MCF 10A (cell line): ENCODE measurements at regions of chr15 and their contacts with region 1.

Region 1: DNA sequence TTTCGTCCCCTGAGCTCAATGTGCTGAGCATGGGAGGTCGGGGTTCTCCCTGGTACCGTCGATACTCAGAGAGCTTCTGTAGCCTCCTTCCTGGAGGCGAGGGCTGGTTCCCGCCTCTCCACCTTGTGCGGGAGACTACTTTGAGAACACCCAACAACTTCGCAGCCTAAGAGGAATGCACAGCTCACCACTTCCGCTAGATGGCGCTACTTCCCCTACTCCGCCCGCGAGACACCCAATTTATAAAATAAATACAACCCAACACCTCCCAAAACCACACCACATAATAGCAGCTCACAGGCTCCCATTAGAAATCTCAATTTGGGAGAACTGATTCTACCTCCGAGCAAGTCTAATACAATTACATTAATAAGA is 1.2 kb downstream of the RGMA start:
- DNase-seq: peak; percentile 80
- H3K4me3 Mint-ChIP-seq: peak overlapping the region; percentile 69
- H3K27ac Mint-ChIP-seq: no peak overlapping the region
- H3K4me1 Mint-ChIP-seq: no peaks in the 10 kb centered on the region
- H3K27me3 Mint-ChIP-seq: peaks cover 23% of the 10 kb centered on the region
- CTCF ChIP-seq: peak; percentile 88

Region 2: GRCh38 chr15:93076875-93077274 is 10.9 kb before region 1 on chr15:
- CTCF ChIA-PET with region 1: interaction called, 34 read pairs
- POLR2A ChIA-PET with region 1: interaction called, 3 read pairs
- intact Hi-C with region 1: no loop called
- DNase-seq: no peak
- H3K4me3 Mint-ChIP-seq: no peak overlapping the region
- H3K27ac Mint-ChIP-seq: no peak overlapping the region
- H3K4me1 Mint-ChIP-seq: peaks cover 6% of the 10 kb centered on the region
- H3K27me3 Mint-ChIP-seq: peaks cover 14% of the 10 kb centered on the region
- CTCF ChIP-seq: no peak

Region 3: DNA sequence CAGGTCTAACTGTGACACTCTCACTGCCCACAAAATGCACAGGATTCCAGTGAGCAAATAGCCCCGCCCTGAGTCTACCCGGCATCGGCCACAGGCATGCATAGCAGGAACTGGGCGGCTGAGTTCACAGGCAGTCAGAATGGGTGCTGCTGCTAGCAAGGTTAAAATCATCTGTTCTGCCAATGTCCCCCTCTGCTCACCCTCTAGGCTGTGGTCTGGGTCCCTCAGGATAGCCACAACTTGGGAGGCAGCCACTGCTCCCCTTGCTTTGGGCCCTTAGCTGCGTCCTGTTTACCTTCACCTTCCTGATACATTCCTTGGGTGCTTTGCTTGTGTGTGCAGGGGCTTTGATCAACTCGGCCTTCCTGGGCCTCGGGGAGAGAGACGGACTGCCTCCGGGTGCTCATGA is 234.1 kb after region 1 on chr15:
- CTCF ChIA-PET with region 1: no interaction called
- POLR2A ChIA-PET with region 1: no interaction called
- intact Hi-C with region 1: loop called (anchors 5 kb)
- DNase-seq: peak; percentile 33
- H3K4me3 Mint-ChIP-seq: no peak overlapping the region
- H3K27ac Mint-ChIP-seq: no peak overlapping the region
- H3K4me1 Mint-ChIP-seq: peaks cover 6% of the 10 kb centered on the region
- H3K27me3 Mint-ChIP-seq: no peaks in the 10 kb centered on the region
- CTCF ChIP-seq: no peak

Region 4: GRCh38 chr15:93974804-93975481 is 887.1 kb after region 1 on chr15:
- CTCF ChIA-PET with region 1: interaction called, 65 read pairs
- POLR2A ChIA-PET with region 1: interaction called, 6 read pairs
- intact Hi-C with region 1: loop called (anchors 1 kb)
- DNase-seq: peak; percentile 70
- H3K4me3 Mint-ChIP-seq: no peak overlapping the region
- H3K27ac Mint-ChIP-seq: no peak overlapping the region
- H3K4me1 Mint-ChIP-seq: no peaks in the 10 kb centered on the region
- H3K27me3 Mint-ChIP-seq: no peaks in the 10 kb centered on the region
- CTCF ChIP-seq: peak; percentile 67